Motor neuron (in vitro differentiated cells): ENCODE measurements at regions of chr1 and their contacts with region 1.

Region 1: GRCh38 chr1:186212544-186213226 is 162.4 kb downstream of the TPR start:
- ATAC-seq: peak; percentile 80 to 98 (median 88)
- H3K4me3 ChIP-seq: no peak overlapping the region
- H3K27ac ChIP-seq: no peak overlapping the region
- H3K4me1 ChIP-seq: no peaks in the 10 kb centered on the region

Region 2: DNA sequence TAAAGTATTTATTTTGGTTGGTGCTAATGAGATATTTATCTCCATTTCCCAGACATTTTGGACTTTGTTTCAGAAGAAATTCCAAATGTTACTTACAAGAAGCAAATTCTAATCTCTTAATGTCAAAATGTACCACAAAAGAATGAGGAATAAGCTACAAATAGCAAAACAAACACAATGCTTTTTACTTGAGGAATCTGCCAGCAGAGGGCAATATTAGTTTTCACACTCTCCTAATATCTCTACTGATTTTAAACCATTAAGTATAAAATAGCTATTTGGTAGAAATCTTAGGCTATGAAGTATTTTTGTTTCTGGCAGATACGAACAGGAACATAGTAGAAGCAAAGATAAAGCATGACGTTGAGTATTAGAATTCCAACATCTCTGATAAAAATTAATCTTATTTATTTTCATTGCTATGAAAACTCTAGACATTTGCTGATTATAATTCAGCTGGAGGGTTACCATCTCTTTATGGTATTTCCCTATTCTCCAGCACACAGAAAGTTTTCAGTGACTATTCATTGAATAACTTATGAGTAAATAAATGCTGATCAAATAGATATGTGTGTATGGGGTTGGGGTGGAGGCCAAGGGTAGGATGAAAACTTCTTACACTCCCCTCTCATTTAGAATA is 491.9 kb before region 1 on chr1:
- in situ Hi-C with region 1: loop called in 5 of 9 experiments (anchors 25 kb)
- ATAC-seq: peak in 3 of 8 experiments; percentile 15 to 44 (median 38)
- H3K4me3 ChIP-seq: no peak overlapping the region
- H3K27ac ChIP-seq: no peak overlapping the region
- H3K4me1 ChIP-seq: no peaks in the 10 kb centered on the region

Region 3: DNA sequence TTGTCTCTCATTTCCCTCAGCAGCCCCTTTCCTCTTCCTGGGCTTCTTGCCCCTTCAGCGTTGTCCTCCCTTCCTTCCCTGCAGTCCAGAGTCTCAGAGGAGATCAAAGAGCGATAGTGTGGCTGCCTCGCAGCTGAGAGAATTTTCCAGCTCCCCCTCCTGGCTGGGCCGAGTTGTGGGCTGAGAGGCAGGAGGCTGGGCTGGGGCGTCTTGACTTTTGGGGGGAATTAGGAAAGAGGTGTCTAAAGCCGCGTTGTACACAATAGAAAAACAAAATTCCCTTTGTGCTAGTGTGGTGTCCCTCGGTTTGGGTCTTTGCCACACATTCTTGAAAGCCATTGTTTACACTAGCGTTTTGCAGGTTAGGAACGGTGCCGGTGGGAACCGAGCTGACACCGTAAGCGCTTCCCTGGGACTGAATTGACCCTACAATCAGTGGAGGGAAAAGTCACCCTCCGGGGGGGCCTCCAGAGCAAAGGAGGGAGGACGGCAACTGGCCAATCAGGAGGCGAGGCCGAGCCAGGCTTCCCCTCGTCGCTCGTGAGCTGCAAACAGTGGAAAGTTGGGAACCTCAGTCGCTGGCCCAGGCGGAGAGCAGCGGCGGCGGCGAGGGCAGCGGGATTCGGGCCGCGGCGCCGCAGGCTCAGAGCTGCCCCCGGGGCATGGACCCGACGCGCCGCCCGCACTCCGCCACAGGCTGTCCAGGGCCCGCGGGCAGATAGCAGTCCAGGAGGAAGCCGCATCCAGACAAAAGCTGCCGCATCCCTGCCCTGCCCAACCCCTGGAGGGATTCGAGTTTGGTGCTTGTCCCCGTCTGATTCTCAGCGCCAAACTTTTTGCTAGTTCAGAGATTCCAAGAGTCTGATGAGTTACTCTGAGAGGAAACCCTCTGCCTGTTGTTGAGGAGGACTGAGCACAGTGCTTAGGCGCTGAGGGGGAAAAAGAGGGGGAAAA is 478.6 kb before region 1 on chr1 and contains the start of gene HMCN1:
- in situ Hi-C with region 1: loop called in 3 of 9 experiments (anchors 25 kb)
- ATAC-seq: peak; percentile 82 to 94 (median 92)
- H3K4me3 ChIP-seq: peak within 1 kb of the TSS; percentile 40 to 44 (median 42)
- H3K27ac ChIP-seq: no peak within 1 kb of the TSS
- H3K4me1 ChIP-seq: no peaks in the 10 kb centered on the region
- total RNA-seq, gene HMCN1: 0.43 to 56.8 (median 6.8) TPM

Region 4: DNA sequence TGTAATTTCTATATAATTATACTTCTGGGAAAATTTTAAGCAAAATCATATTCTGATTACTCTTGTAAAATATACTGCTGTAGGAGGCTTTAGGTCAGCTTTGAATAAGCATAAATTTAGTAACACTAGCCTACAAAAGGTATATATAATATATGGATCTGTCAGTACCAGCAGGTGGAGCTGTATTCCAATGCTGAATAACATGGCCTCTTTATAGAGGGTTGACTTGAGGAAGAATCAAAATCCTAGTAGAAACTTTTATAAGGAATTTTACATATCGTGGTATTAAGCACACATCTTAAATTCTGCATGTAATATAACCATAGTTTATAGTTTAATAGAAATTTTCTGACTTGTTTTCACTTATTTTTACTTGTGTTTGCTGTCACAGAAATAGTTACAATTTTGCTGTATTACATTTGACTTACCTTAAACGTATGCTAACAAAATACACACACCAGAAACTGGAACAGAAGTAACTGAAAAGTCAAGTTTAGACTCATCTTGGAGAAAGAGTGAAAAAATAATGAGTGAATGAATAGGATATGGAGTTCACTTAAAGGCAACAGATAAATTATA is 399.2 kb before region 1 on chr1:
- in situ Hi-C with region 1: loop called in 1 of 9 experiments (anchors 25 kb)
- ATAC-seq: peak in 4 of 8 experiments; percentile 50 to 70 (median 58)
- H3K4me3 ChIP-seq: no peak overlapping the region
- H3K27ac ChIP-seq: no peak overlapping the region
- H3K4me1 ChIP-seq: no peaks in the 10 kb centered on the region

Region 5: GRCh38 chr1:186559601-186560116 is 347.0 kb after region 1 on chr1:
- in situ Hi-C with region 1: no loop called
- ATAC-seq: no peak
- H3K4me3 ChIP-seq: no peak overlapping the region
- H3K27ac ChIP-seq: no peak overlapping the region
- H3K4me1 ChIP-seq: no peaks in the 10 kb centered on the region